ENCODE measurements at regions of chr3 and their contacts with region 1.

Region 1: GRCh38 chr3:42635111-42635510 is 18.4 kb upstream of the ZBTB47 start:
- DNase-seq: no peak
- H3K4me3 Mint-ChIP-seq: peak overlapping the region; percentile 30
- H3K27ac Mint-ChIP-seq: peak overlapping the region; percentile 67
- H3K4me1 Mint-ChIP-seq: peaks cover 20% of the 10 kb centered on the region
- H3K27me3 Mint-ChIP-seq: no peaks in the 10 kb centered on the region

Region 2: DNA sequence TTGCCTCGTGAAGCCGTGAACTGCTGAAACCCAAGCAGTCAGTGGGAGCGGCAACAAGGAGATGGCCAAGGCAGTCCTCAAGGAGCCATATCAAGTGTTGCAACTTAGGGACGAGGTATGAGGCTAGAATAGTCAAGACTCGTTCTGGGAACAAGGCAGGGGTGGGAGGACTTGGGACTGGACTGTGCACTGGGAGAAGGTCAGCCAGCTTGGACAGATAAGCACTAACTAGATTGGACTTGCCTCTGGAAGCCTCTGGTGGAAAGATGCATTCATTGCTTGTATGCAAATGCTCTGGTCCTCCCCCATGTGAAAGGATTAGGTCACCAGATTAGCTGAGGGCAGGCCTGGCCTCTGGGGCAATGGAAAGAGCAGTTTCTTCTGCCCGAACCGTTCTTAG is 1559.1 kb before region 1 on chr3:
- intact Hi-C with region 1: no loop called
- DNase-seq: no peak
- H3K4me3 Mint-ChIP-seq: no peak overlapping the region
- H3K27ac Mint-ChIP-seq: no peak overlapping the region
- H3K4me1 Mint-ChIP-seq: no peaks in the 10 kb centered on the region
- H3K27me3 Mint-ChIP-seq: no peaks in the 10 kb centered on the region

Region 3: GRCh38 chr3:42502429-42503250 is 132.5 kb before region 1 on chr3 and contains the start of gene VIPR1:
- intact Hi-C with region 1: loop called (anchors 5 kb)
- DNase-seq: peak; percentile 85
- H3K4me3 Mint-ChIP-seq: peak within 1 kb of the TSS; percentile 86
- H3K27ac Mint-ChIP-seq: no peak within 1 kb of the TSS
- H3K4me1 Mint-ChIP-seq: peaks cover 31% of the 10 kb centered on the region
- H3K27me3 Mint-ChIP-seq: peaks cover 26% of the 10 kb centered on the region
- total RNA-seq, gene VIPR1: 0.69 and 0.88 TPM in 2 replicates

Region 4: DNA sequence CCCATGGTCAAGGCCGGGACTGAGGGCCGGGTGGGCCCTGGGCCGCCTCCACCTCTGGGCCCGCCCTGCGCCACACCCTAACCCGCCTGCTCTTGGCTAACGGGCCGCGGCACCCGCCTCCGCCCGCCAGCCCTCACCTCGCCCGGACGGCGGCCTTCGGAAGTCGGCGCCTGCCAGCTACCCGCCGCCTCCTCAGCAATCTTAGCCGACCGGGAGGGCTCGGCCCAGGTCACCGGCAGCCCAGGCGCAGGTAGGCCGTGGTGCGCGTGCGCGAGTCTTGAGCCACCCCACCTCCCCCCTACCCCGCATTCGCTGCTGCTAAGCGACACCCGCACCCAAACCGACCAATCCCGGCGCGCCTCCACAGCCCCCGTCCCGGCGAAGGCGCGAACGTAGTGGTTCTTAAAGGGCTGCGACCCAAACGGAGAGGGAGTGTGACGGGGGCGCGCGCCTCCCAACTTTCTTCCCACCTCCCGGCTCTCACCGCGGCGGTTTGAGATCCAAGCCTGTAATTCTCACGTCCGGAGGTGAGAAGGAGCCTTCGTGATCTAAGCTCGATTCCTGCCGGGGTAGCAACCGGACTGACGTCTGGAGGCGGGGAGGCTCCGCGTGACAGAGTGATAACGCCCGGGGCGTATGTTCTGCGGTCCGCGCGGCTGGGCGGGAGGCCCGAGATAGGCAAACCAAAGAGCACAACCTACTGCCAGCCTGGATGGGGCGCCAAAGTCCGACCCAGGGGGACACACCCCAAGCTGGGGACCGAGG is 53.2 kb before region 1 on chr3 and contains the start of gene SEC22C:
- intact Hi-C with region 1: loop called (anchors 1 kb)
- DNase-seq: peak; percentile 93
- H3K4me3 Mint-ChIP-seq: peak within 1 kb of the TSS; percentile 90
- H3K27ac Mint-ChIP-seq: peak within 1 kb of the TSS; percentile 93
- H3K4me1 Mint-ChIP-seq: peaks cover 61% of the 10 kb centered on the region
- H3K27me3 Mint-ChIP-seq: peaks cover 1% of the 10 kb centered on the region
- total RNA-seq, gene SEC22C: 37.5 and 38.3 TPM in 2 replicates

Region 5: DNA sequence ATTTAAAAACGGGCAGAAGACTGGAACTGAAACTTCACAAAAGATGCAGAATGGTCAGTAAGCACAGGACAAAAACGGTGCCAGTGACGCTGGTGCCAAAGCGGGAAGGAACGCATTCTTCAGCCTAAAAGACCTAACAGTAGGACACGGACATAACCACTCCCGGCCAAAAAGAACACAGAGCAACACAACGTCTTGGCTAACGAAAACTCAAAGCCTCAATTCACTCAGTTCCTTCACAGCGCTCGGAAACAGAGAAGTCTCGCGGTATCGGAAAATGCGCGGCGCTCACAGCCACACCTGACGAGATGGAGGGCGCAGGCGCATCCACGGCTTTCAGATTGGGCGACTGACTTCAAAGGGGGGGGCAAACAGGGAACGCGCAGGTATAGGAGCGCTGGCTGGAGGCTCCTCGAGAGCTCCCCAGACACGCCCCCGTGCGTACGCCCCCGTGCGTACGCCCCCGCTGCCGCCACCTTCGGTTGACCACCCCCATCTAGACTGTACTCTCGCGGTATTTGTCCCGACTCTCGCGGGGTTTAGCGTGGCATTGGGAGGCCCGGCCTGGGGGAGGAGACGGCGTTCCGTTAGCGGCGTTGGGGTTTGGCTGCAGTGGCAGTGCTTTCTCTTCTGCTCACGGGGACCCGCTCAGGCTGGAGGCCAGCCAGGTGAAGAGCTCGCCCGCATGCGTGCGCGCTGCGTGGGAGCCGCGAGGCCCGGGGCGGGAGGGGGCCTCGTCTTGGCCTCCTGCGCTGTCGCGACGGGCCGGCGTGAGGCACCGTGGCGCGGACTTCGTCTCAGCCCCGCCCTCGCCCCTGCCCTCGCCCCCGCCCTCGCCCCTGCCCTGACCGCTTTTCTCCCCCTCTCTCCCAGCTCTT is 34.8 kb before region 1 on chr3 and contains the start of gene NKTR:
- intact Hi-C with region 1: loop called (anchors 1 kb)
- DNase-seq: peak; percentile 99
- H3K4me3 Mint-ChIP-seq: peak within 1 kb of the TSS; percentile 91
- H3K27ac Mint-ChIP-seq: peak within 1 kb of the TSS; percentile 98
- H3K4me1 Mint-ChIP-seq: peaks cover 40% of the 10 kb centered on the region
- H3K27me3 Mint-ChIP-seq: no peaks in the 10 kb centered on the region
- total RNA-seq, gene NKTR: 76.9 and 79.7 TPM in 2 replicates

Region 6: GRCh38 chr3:42683875-42684598 is 48.9 kb after region 1 on chr3:
- intact Hi-C with region 1: loop called (anchors 1 kb)
- DNase-seq: no peak
- H3K4me3 Mint-ChIP-seq: no peak overlapping the region
- H3K27ac Mint-ChIP-seq: no peak overlapping the region
- H3K4me1 Mint-ChIP-seq: peaks cover 5% of the 10 kb centered on the region
- H3K27me3 Mint-ChIP-seq: peaks cover 15% of the 10 kb centered on the region

Region 7: DNA sequence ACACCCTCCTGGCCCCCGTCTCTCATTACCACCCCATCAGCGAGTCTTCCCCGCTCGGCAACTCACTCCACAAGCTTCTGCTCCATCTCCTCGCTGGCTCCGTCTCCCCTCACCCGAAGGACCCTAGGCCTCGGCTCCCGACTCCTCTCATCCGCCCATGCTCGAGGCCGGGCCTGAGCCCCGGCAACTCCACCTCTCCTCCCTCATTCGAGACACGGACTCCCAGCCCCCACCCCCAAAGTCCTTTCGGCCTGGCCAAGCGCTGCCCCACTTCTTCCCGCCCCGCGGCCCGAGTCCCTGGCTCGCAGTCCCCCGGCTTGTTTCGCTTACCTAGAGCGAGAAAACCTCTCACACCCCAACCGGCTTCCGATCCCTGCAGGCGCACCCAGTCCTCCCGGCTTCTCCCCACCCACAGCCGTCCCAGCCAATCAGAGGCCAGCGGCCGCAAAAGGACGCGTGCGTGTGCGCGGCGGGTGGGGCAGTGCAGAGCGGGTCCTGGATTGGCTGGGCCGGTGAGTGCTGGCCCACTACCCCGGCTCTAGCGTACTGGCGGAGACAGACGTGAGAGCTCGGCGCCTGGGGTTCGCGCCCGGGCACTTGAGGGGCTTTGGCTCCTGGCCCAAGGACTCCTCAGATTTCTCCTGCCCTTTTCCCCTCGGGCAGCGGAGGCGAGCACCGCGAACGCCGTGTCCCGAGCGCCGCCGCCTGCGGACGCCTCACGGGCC is 169.2 kb after region 1 on chr3 and contains the start of gene HIGD1A:
- intact Hi-C with region 1: loop called (anchors 1 kb)
- DNase-seq: peak; percentile 92
- H3K4me3 Mint-ChIP-seq: peak within 1 kb of the TSS; percentile 99
- H3K27ac Mint-ChIP-seq: peak within 1 kb of the TSS; percentile 90
- H3K4me1 Mint-ChIP-seq: peaks cover 43% of the 10 kb centered on the region
- H3K27me3 Mint-ChIP-seq: peaks cover 27% of the 10 kb centered on the region
- total RNA-seq, gene HIGD1A: 90.1 and 97.5 TPM in 2 replicates

Measured in activated T-helper 1 cell treated with anti-CD3 and anti-CD28 coated beads, Interleukin-12 subunit alpha, Interleukin-12 subunit beta, Interleukin-2, Interleukin-4 antibody, amounts not matched to agents 30 ng/mL and 10 ng/mL and 1 ng/mL, durations not matched to agents 14 hours and 24 hours and 36 hours (primary cell).